SK-N-SH (cell line): ENCODE measurements at regions of chr1 and their contacts with region 1.

Region 1: GRCh38 chr1:233904633-233905415 is at the start of gene SLC35F3:
- DNase-seq: peak; percentile 91
- H3K4me3 ChIP-seq: peak within 1 kb of the TSS; percentile 37 to 49
- H3K27ac ChIP-seq: no peak within 1 kb of the TSS
- H3K4me1 ChIP-seq: no peaks in the 10 kb centered on the region; a peak in 2 of 4 replicates
- H3K27me3 ChIP-seq: peaks cover 17% of the 10 kb centered on the region; the same call in 1 of the 2 replicates
- CTCF ChIP-seq: peak; percentile 30; the same call in 1 of the 2 replicates
- EP300 ChIP-seq: no peak
- RAD21 ChIP-seq: peak; percentile 41; the same call in 1 of the 2 replicates
- polyA plus RNA-seq, gene SLC35F3: 0.87 and 1.5 TPM in 2 replicates

Region 2: GRCh38 chr1:233944601-233945000 is 39.8 kb after region 1 on chr1:
- CTCF ChIA-PET with region 1: interaction called, 11 read pairs
- POLR2A ChIA-PET with region 1: no interaction called
- DNase-seq: no peak
- H3K4me3 ChIP-seq: no peak overlapping the region
- H3K27ac ChIP-seq: no peak overlapping the region
- H3K4me1 ChIP-seq: no peaks in the 10 kb centered on the region; a peak in 1 of 4 replicates
- H3K27me3 ChIP-seq: no peaks in the 10 kb centered on the region
- CTCF ChIP-seq: no peak
- EP300 ChIP-seq: no peak
- RAD21 ChIP-seq: no peak

Region 3: DNA sequence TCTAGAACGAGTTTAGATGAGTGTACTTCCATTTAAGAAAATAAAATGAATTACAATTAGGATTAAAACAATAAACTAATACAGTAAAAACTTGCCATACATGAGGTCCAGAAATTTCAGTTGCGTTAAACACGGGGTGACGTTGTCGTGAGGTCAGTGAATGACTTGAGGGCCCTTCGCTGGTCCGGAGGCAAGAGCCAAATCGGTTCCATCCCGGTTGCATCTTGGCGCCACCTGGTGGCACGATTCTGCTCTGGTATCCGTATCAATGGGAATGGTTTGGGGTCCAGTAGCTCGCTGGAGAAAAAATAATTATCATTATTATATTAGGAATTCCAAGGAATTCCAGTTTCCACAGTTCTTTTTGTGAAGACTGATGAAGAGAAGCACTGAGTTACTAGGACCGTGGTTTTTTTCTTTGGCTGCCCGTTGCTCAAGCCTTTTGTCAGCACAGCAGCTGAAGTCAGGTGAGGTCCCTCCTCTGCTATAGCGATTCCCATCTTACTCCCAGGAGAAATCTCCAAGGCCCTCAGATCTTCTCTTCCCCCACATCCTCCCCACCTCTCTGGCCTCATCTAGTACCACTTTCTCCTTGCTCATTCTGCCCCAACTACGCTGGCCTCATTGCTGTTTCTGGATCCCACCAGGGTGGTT is 161.1 kb after region 1 on chr1:
- CTCF ChIA-PET with region 1: interaction called, 11 read pairs
- POLR2A ChIA-PET with region 1: interaction called, 3 read pairs
- DNase-seq: peak; percentile 70
- H3K4me3 ChIP-seq: no peak overlapping the region
- H3K27ac ChIP-seq: no peak overlapping the region
- H3K4me1 ChIP-seq: no peaks in the 10 kb centered on the region; a peak in 1 of 4 replicates
- H3K27me3 ChIP-seq: no peaks in the 10 kb centered on the region
- CTCF ChIP-seq: peak; percentile 89
- EP300 ChIP-seq: no peak
- RAD21 ChIP-seq: peak; percentile 76